Kidney (tissue), 22 donors: ENCODE measurements at regions of chr17 and their contacts with region 1.

Region 1: DNA sequence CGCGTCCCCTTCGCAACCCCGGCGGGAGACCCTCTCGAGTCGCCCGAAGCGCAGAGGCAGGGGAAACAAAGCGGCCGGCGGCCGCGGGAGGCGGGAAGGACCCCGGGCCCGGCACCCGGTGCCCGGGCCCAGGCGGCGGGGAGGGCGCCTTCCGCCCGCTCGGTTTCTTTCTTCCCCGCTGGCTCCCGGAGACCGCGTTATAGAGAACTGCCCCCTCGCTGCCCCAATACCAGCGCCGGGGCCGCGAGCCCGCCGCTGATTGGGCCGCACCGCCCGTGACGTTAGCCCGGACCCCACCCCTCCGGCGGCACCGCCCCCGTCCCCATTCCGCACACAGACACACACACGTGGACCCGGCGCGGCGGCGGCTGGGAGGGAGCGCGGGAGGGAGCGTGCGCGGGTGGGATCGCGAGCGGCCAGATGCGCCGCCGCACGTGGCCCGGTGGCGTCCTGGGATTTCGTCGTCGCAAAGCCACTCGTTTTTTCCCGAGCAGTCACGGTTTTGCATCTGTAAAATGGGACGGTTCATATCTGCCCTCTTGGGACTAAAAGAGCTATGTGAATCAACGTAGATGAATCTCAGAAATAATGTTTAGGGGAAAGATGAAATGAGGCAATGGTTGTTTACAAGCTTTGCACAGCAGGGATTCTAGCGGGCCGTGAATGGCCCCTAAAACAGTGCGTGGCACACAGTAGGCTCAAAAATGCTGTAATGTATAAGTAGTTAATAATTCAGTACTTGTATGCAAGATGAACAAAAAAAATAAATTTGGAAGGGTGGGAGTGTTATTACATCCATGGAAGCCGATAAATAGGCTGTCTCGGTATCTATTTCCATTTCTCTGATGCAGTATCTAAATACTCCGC is at the start of gene EPOP:
- DNase-seq: peak; percentile 86 to 95 (median 91)
- H3K4me3 ChIP-seq: peak within 1 kb of the TSS; percentile 11 to 50 (median 26)
- H3K27ac ChIP-seq: no peak within 1 kb of the TSS
- H3K4me1 ChIP-seq: peaks cover 0 to 9% (median 3%) of the 10 kb centered on the region in 3 donors
- H3K27me3 ChIP-seq: peaks cover 21% of the 10 kb centered on the region
- CTCF ChIP-seq: no peak
- total RNA-seq, gene EPOP: 1.3 TPM

Region 2: GRCh38 chr17:38617011-38617867 is 57.7 kb before region 1 on chr17:
- intact Hi-C with region 1: no loop called
- DNase-seq: peak in 2 of 5 donors; percentile 27 to 42
- H3K4me3 ChIP-seq: no peak overlapping the region
- H3K27ac ChIP-seq: no peak overlapping the region
- H3K4me1 ChIP-seq: no peaks in the 10 kb centered on the region
- H3K27me3 ChIP-seq: no peaks in the 10 kb centered on the region
- CTCF ChIP-seq: no peak

Region 3: DNA sequence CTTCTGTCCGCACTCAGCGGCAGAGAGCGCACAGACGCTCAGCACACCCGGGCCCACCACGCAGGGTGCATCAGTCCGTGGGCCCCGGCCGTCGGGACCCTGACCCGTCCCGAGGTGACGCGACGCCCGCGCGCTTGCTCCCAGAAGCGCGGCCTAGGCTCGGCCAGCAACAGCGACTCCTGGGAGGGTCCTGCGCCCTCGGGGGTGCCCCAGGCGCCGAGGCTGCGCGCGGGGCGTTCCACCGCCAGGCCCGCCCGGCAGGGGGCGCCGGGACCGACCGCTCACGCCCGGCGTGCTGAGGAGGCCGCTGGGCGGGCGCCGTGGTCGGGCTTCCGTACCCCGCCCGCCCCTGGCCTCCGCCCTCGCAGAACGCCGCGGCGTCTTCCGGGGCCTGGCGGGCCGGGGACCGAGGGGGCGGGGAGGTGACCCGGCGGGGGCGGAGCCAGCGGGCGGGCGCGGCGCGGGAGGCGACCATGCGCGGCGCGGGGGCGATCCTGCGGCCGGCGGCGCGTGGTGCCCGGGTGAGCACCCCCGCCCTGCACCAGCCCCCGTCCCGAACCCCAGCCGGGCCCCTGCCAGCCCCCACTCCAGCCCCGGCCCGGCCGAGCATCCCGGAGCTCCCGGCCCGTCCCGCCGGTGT is 55.0 kb after region 1 on chr17 and contains the start of gene CISD3:
- intact Hi-C with region 1: loop called (anchors 5 kb)
- DNase-seq: peak; percentile 80 to 96 (median 87)
- H3K4me3 ChIP-seq: peak within 1 kb of the TSS; percentile 45 to 94 (median 74)
- H3K27ac ChIP-seq: peak within 1 kb of the TSS; percentile 95 to 97
- H3K4me1 ChIP-seq: peaks cover 0 to 42% (median 37%) of the 10 kb centered on the region in 3 donors
- H3K27me3 ChIP-seq: no peaks in the 10 kb centered on the region
- CTCF ChIP-seq: peak; percentile 78
- total RNA-seq, gene CISD3: 37.7 TPM